Thyroid gland (tissue), 4 donors: ENCODE measurements at regions of chr20 and their contacts with region 1.

Region 1: DNA sequence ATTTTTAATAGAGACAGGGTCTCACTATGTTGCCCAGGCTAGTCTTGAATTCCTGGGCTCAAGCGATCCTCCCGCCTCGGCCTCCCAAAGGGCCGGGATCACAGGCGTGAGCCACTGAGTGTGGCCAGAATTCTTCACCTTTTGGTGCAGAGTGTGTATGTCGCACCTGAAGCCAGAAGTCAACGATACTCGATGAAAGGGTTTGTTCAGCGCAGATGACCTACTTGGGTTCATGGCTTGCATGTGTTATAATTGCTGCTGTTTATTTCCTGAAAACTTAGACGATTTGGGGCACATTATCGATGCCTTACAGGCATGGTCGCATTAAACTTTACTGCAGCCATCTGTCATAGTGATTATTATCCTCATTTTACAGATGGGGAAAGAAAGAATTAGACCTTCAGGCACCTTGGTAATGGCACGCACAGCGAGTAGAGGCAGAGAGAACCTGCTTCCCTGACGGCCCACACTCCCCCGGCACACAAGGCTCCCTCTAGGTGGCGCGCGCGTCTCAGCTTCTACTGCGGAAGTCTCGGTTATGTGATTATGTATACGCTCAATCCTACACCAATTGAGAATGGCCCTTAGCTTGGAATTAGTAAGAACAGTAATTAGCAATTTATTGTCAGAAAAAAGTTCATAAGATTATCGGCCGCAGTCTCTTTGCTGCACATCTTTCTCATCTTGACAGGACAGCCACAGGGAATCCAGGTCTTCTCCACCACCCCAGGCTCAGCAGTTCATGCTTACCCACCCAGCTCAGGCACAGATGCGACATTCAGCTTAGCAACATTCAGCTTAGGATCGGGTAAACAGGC is 212.8 kb upstream of the PROKR2 start:
- DNase-seq: peak; percentile 80 to 88
- H3K4me3 ChIP-seq: no peak overlapping the region
- H3K27ac ChIP-seq: no peak overlapping the region
- H3K4me1 ChIP-seq: peaks cover 0 to 8% of the 10 kb centered on the region in 2 donors
- H3K27me3 ChIP-seq: no peaks in the 10 kb centered on the region
- CTCF ChIP-seq: peak in 5 of 6 experiments; percentile 43 to 82 (median 68)
- POLR2A ChIP-seq: no peak

Region 2: DNA sequence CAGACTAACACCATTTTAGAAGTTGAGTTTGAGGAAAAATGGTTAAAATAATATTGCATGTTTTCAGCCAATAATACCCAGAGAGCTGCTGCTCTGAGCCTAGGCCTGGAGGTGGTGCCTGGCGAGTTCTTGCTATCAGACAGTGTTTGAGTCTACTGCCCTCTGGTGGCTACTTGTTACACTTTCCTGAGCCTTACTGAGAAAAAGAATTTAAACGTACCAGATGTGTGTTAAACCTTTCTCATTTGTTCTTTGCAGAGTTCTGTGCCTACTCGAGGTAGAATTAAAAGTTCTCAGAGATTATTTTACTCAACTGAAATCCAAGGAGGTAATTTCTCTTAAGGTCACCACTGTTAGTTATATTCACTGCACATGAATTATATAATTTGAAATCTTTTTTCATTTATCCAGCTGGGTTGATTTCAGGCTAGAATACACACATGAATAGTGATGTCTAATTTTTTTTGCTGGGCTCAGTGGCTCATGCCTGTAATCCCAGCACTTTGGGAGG is 258.9 kb after region 1 on chr20:
- intact Hi-C with region 1: loop called (anchors 5 kb)
- DNase-seq: peak; percentile 80 to 82
- H3K4me3 ChIP-seq: no peak overlapping the region
- H3K27ac ChIP-seq: peak overlapping the region; percentile 70 to 84 (median 71)
- H3K4me1 ChIP-seq: peaks cover 22 to 34% of the 10 kb centered on the region in 2 donors
- H3K27me3 ChIP-seq: no peaks in the 10 kb centered on the region
- CTCF ChIP-seq: peak; percentile 63 to 94 (median 88)
- POLR2A ChIP-seq: no peak

Region 3: GRCh38 chr20:5933802-5934436 is 404.4 kb after region 1 on chr20:
- intact Hi-C with region 1: loop called (anchors 10 kb)
- DNase-seq: no peak
- H3K4me3 ChIP-seq: no peak overlapping the region
- H3K27ac ChIP-seq: no peak overlapping the region
- H3K4me1 ChIP-seq: no peaks in the 10 kb centered on the region
- H3K27me3 ChIP-seq: no peaks in the 10 kb centered on the region
- CTCF ChIP-seq: no peak
- POLR2A ChIP-seq: no peak

Region 4: DNA sequence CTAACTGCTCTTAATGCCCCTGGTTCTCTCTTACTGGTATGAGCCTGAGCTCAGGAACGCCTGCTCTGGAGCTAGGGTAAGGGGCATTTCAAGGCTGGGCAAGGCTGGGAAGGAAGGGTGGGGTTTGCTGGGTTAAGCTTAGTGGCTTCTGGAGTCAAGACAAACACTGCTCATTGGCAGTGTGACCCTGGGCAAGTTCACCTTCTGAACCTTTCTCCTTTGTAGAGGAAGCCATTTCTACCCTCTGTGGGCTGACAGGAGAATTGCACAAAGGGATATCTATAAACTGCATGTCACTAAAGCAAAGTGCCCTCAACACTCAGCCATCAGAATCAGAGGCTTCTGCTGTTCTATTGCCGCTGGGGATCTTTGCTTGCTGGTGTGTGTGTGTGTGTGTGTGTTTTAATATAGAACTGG is 544.6 kb after region 1 on chr20:
- intact Hi-C with region 1: loop called (anchors 2 kb)
- DNase-seq: no peak
- H3K4me3 ChIP-seq: no peak overlapping the region
- H3K27ac ChIP-seq: no peak overlapping the region
- H3K4me1 ChIP-seq: peaks cover 8 to 9% of the 10 kb centered on the region in 2 donors
- H3K27me3 ChIP-seq: no peaks in the 10 kb centered on the region
- CTCF ChIP-seq: peak in 2 of 6 experiments; percentile 17 to 22
- POLR2A ChIP-seq: no peak